ENCODE measurements at regions of chr12 and their contacts with region 1.

Region 1: GRCh38 chr12:57487597-57488401 is at the start of gene MARS1:
- DNase-seq: peak; percentile 96
- ATAC-seq: peak; percentile 98
- H3K4me3 Mint-ChIP-seq: peak within 1 kb of the TSS; percentile 100
- H3K27ac Mint-ChIP-seq: peak within 1 kb of the TSS; percentile 94
- H3K4me1 Mint-ChIP-seq: peaks cover 35% of the 10 kb centered on the region
- H3K27me3 Mint-ChIP-seq: no peaks in the 10 kb centered on the region
- total RNA-seq, gene MARS1: 389 to 583 TPM

Region 2: DNA sequence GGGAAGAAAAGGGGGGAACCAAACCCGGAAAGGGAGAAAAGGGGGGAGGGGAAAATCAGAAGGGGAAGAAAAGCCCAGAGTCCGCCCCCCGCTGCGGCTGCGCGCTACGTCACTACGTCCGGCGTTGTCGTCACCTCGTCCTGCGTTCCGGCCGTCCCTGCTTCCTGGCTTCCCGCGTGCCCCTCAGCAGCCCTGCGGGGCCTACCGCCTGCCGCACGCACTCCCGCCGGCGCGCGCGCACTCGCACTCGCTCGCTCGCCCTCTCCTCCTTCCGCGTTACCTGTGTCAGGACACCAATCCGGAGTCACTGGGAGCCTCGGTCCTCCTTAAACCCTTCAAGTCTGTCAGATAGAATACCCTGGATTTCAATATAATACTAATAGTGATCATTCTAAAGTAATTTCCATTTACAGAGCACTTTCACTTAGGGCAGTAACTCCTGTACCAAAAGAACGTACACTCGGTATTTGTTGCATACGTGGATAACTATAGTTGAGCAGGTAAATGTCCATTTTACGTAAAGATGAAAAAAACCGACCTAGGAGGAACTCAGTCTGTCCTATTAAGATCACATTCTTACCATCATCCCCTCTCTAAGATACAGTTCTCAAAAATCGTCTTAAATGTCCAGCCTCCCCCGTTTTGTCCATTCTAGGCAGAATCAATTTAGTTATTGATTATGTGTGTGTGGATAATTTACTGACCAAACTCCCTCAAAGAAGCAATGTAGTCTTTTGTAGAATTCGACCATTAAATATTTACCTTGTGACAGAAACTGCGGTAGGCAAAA is 56.7 kb before region 1 on chr12 and contains the start of gene R3HDM2:
- CTCF ChIA-PET with region 1: interaction called, 3 read pairs
- POLR2A ChIA-PET with region 1: no interaction called
- intact Hi-C with region 1: loop called in 1 of 2 experiments (anchors 2 kb)
- DNase-seq: peak; percentile 97
- ATAC-seq: peak; percentile 95
- H3K4me3 Mint-ChIP-seq: peak within 1 kb of the TSS; percentile 89
- H3K27ac Mint-ChIP-seq: peak within 1 kb of the TSS; percentile 100
- H3K4me1 Mint-ChIP-seq: peaks cover 35% of the 10 kb centered on the region
- H3K27me3 Mint-ChIP-seq: no peaks in the 10 kb centered on the region
- total RNA-seq, gene R3HDM2: 45.9 to 52.5 TPM

Region 3: DNA sequence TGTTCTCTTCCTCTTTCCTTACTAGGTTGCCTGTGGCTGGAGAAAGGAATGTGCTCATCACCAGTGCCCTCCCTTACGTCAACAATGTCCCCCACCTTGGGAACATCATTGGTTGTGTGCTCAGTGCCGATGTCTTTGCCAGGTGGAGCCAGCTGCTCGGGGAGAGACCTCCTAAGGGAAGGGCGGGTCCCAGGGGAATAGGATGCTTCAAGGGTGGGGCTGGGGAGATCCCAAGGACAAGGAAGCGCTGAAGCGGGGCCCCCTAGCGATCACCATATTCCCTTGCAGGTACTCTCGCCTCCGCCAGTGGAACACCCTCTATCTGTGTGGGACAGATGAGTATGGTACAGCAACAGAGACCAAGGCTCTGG is 10.3 kb after region 1 on chr12:
- CTCF ChIA-PET with region 1: no interaction called
- POLR2A ChIA-PET with region 1: no interaction called
- intact Hi-C with region 1: loop called in 1 of 2 experiments (anchors 2 kb)
- DNase-seq: no peak
- ATAC-seq: no peak
- H3K4me3 Mint-ChIP-seq: no peak overlapping the region
- H3K27ac Mint-ChIP-seq: no peak overlapping the region
- H3K4me1 Mint-ChIP-seq: peaks cover 9% of the 10 kb centered on the region
- H3K27me3 Mint-ChIP-seq: no peaks in the 10 kb centered on the region

Region 4: GRCh38 chr12:57546438-57547383 is 58.9 kb after region 1 on chr12 and contains the start of gene DCTN2:
- CTCF ChIA-PET with region 1: interaction called, 4 read pairs
- POLR2A ChIA-PET with region 1: no interaction called
- intact Hi-C with region 1: loop called (anchors 1 to 2 kb)
- DNase-seq: peak; percentile 97
- ATAC-seq: peak; percentile 98
- H3K4me3 Mint-ChIP-seq: peak within 1 kb of the TSS; percentile 99
- H3K27ac Mint-ChIP-seq: peak within 1 kb of the TSS; percentile 99
- H3K4me1 Mint-ChIP-seq: peaks cover 45% of the 10 kb centered on the region
- H3K27me3 Mint-ChIP-seq: peaks cover 13% of the 10 kb centered on the region
- total RNA-seq, gene DCTN2: 69.7 to 81.2 TPM

Region 5: DNA sequence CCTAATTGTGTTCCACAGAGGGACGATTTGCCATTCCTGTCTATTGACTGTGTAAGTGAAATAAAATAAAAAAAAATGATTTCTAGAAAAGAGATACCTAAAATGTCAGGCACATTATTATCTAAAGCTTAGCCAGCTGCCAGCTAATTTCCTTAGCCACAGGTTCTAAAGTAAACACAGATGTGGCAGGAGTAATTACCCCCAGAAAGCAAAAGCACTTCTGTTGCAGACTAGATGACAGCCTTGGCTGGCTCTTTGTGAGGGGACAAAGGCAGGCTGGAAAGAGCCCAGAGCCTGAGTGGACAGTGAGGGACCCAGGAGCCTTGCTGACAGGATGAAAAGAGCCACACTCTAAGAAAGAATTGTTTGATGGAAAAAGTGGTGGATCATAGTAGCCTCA is 1014.4 kb after region 1 on chr12:
- CTCF ChIA-PET with region 1: no interaction called
- POLR2A ChIA-PET with region 1: no interaction called
- intact Hi-C with region 1: no loop called
- DNase-seq: no peak
- ATAC-seq: no peak
- H3K4me3 Mint-ChIP-seq: no peak overlapping the region
- H3K27ac Mint-ChIP-seq: no peak overlapping the region
- H3K4me1 Mint-ChIP-seq: no peaks in the 10 kb centered on the region
- H3K27me3 Mint-ChIP-seq: peaks cover 2% of the 10 kb centered on the region

Measured in activated CD4-positive, alpha-beta T cell treated with anti-CD3 and anti-CD28 coated beads for 36 hours (primary cell).